Ascending aorta (tissue), 2 donors: ENCODE measurements at regions of chr15 and their contacts with region 1.

Region 1: GRCh38 chr15:81480645-81481053 is 106.6 kb upstream of the TMC3 start:
- DNase-seq: no peak
- H3K4me3 ChIP-seq: no peak overlapping the region
- H3K27ac ChIP-seq: no peak overlapping the region
- H3K4me1 ChIP-seq: no peaks in the 10 kb centered on the region
- H3K27me3 ChIP-seq: no peaks in the 10 kb centered on the region
- CTCF ChIP-seq: peak; percentile 56 to 81 (median 66)

Region 2: DNA sequence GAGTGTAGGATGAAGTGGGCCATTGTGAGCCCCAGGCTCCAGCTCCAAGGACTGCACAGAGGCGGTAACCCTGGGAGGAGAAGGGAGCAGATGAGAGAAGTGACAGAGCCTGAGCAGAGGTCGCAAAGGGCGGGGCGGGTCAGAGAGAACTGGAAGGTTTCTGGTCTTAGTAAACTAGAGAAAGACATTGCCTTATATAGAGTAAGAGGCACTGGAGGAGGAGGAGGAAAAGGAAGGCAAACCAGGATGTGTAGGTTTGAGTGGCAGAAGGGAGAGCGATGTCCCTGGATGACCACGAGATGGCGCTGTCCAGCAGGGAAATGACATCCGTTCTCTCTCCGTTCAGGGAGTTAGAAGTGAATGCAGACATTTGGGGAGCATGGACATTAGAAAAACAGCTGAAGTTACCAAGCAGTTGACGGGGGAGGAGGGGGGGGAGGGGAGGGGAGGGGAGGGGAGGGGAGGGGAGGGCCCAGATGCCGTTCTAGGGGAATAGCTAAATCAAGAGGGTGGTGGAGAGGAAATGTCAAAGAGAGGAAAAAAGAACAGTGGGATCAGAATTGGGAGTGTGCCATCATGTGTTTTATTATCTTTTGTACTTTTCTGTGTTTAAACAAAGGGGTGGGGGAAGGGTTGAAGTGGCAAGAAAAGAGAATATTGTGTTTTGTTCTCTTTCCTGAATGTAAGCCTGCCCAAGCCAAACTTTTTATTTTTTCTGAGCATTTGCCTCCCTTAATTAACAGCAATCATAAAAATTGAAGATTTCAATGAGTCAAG is 205.5 kb before region 1 on chr15:
- intact Hi-C with region 1: loop called (anchors 5 kb)
- DNase-seq: peak in 1 of 2 donors; percentile 78
- H3K4me3 ChIP-seq: no peak overlapping the region
- H3K27ac ChIP-seq: peak overlapping the region; percentile 3 to 36
- H3K4me1 ChIP-seq: peaks cover 0 to 8% of the 10 kb centered on the region in 2 donors
- H3K27me3 ChIP-seq: no peaks in the 10 kb centered on the region
- CTCF ChIP-seq: peak; percentile 71 to 87 (median 77)

Region 3: DNA sequence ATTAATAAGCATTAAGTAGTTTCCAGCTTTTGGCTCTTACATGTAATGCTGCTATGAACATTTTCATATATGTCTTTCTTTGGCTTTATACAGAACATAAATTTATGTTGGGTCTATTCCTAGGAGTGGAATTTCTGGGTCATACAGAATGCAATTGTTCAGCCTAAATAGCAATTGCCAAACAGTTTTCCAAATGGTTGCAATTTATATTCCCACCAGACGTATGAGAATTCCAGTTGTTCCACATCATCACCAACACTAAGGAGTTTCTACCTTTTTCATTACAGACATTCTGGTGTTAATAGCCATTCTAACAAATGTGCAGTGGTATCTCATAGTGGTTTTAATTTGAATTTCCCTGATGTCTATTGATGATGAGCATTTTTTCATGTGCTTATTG is 53.5 kb after region 1 on chr15:
- intact Hi-C with region 1: no loop called
- DNase-seq: no peak
- H3K4me3 ChIP-seq: no peak overlapping the region
- H3K27ac ChIP-seq: no peak overlapping the region
- H3K4me1 ChIP-seq: peaks cover 0 to 7% of the 10 kb centered on the region in 2 donors
- H3K27me3 ChIP-seq: no peaks in the 10 kb centered on the region
- CTCF ChIP-seq: no peak

Region 4: DNA sequence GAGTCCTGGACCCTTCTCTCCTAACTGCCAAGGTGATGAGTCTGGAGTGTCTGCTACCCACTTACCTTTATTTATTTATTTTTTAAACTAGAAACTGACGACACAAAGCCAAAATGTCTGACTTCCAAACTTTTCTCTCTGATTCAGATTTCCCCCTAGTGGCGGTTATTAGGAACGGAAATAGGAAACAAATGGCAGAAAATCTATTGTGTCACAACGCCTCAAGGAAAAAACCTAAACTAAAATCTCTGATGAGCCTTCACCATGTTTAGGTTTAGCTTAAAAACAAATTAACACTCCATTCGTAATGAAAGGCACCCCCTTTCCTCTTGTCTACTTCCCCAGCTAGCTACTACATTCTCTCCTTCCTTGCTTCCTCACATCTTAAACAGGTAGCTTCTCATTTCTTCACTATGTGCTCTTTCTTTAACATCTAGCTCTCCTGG is 659.2 kb after region 1 on chr15:
- intact Hi-C with region 1: loop called (anchors 5 kb)
- DNase-seq: no peak
- H3K4me3 ChIP-seq: no peak overlapping the region
- H3K27ac ChIP-seq: no peak overlapping the region
- H3K4me1 ChIP-seq: no peaks in the 10 kb centered on the region
- H3K27me3 ChIP-seq: no peaks in the 10 kb centered on the region
- CTCF ChIP-seq: peak; percentile 40 to 69 (median 56)

Region 5: DNA sequence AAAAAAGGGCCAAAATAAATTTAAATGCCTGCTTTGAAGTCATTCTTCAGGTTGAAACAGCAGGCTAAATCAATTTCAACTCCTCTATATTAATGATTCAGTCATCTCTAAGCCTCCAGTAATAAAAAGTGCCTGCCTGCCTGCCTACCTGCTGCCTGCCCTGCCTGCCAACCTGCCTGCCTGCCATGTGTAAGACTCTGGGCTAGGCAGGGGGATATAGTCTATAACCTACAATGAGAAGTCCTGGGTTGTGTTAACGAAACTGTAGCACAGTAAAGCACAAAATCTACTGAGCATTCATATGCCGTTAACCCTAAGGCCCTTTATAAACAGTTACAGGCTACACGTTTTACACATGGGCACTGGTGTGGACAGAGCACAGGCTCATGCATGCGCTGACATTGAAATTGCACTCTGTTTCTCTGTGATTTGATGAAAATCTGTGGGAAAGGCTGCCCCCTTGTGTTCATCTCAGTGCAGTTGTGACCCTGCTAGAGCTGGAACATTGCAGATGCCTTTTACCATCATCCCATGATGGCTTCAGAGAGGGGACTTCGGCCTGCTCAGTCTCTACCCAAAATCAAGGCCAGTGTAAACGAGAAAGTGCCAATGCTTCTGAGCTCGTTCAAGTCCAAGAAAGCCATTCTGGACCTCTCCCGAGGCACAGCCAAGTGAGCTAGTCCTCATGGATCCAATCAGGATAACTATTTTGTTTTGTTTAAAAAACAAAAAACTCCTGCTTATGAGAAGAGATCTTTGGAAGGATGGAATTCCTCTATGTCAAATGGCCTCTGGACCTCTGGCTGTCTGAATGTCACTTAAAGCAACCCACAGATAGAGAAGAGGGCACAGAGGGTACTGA is 717.3 kb after region 1 on chr15:
- intact Hi-C with region 1: loop called (anchors 5 kb)
- DNase-seq: peak in 1 of 2 donors; percentile 68
- H3K4me3 ChIP-seq: no peak overlapping the region
- H3K27ac ChIP-seq: no peak overlapping the region
- H3K4me1 ChIP-seq: no peaks in the 10 kb centered on the region
- H3K27me3 ChIP-seq: no peaks in the 10 kb centered on the region
- CTCF ChIP-seq: peak; percentile 42 to 80 (median 65)